ENCODE measurements at regions of chr12 and their contacts with region 1.

Region 1: GRCh38 chr12:49698619-49699545 is 8.3 kb downstream of the FMNL3 start:
- DNase-seq: peak; percentile 21
- H3K4me3 Mint-ChIP-seq: peak overlapping the region; percentile 67
- H3K27ac Mint-ChIP-seq: peak overlapping the region; percentile 83
- H3K4me1 Mint-ChIP-seq: peaks cover 61% of the 10 kb centered on the region
- H3K27me3 Mint-ChIP-seq: peaks cover 2% of the 10 kb centered on the region

Region 2: DNA sequence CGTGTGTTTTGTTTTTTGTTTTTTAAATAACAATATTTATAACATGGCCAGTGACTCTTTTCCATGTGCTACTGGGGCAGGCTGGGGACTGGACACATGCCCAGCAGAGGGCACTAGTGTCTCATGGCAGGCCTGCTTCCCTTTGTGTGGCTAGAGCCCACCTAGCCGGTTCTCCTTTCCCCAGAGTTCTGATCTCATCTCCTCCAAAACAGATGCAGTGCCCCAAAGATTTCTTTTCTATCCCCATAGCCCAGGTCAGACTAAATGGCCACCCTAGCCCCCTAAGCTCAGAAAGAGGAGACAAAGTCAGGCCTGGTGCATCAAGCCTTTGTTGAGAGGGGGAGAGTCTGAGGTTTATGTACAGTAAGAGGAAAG is 54.3 kb before region 1 on chr12:
- intact Hi-C with region 1: loop called (anchors 2 kb)
- DNase-seq: peak; percentile 71
- H3K4me3 Mint-ChIP-seq: no peak overlapping the region
- H3K27ac Mint-ChIP-seq: peak overlapping the region; percentile 82
- H3K4me1 Mint-ChIP-seq: peaks cover 26% of the 10 kb centered on the region
- H3K27me3 Mint-ChIP-seq: no peaks in the 10 kb centered on the region

Region 3: GRCh38 chr12:49673446-49674317 is 25.2 kb before region 1 on chr12:
- intact Hi-C with region 1: loop called (anchors 1 kb)
- DNase-seq: no peak
- H3K4me3 Mint-ChIP-seq: peak overlapping the region; percentile 16
- H3K27ac Mint-ChIP-seq: peak overlapping the region; percentile 89
- H3K4me1 Mint-ChIP-seq: peaks cover 84% of the 10 kb centered on the region
- H3K27me3 Mint-ChIP-seq: no peaks in the 10 kb centered on the region

Region 4: GRCh38 chr12:49750027-49750995 is 51.4 kb after region 1 on chr12:
- intact Hi-C with region 1: loop called (anchors 2 kb)
- DNase-seq: peak; percentile 20
- H3K4me3 Mint-ChIP-seq: peak overlapping the region; percentile 40
- H3K27ac Mint-ChIP-seq: peak overlapping the region; percentile 85
- H3K4me1 Mint-ChIP-seq: peaks cover 64% of the 10 kb centered on the region
- H3K27me3 Mint-ChIP-seq: no peaks in the 10 kb centered on the region